ENCODE measurements at regions of chr6 and their contacts with region 1.

Region 1: GRCh38 chr6:144104898-144105487 is 9.6 kb upstream of the SF3B5 start:
- DNase-seq: peak in 5 of 7 donors; percentile 30 to 66 (median 38)
- H3K4me3 ChIP-seq: no peak overlapping the region
- H3K27ac ChIP-seq: no peak overlapping the region
- H3K4me1 ChIP-seq: no peaks in the 10 kb centered on the region
- H3K27me3 ChIP-seq: no peaks in the 10 kb centered on the region
- CTCF ChIP-seq: peak; percentile 58 to 87 (median 78)
- POLR2A ChIP-seq: no peak

Region 2: DNA sequence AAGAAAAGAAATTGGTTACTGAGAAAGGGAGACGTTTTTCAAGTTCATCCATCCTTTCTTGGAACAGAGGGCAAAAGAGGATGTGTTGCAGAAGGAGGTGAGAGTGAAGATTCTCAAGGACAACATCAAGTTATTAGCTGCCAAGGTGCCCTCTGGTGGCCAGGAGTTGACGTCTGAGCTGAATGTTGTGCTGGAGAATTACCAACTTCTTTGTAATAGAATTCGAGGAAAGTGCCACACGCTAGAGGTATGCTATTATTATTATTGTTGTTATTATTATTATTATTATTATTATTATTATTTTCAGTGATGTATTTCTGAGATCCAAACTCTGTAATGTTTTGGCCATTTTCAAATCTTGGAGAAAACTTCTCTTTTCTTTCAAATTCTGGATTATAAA is 377.1 kb after region 1 on chr6:
- intact Hi-C with region 1: loop called in 1 of 2 experiments (anchors 10 kb)
- DNase-seq: peak; percentile 71 to 94 (median 83)
- H3K4me3 ChIP-seq: no peak overlapping the region
- H3K27ac ChIP-seq: no peak overlapping the region
- H3K4me1 ChIP-seq: peaks cover 10 to 16% of the 10 kb centered on the region in 2 donors
- H3K27me3 ChIP-seq: no peaks in the 10 kb centered on the region
- CTCF ChIP-seq: peak; percentile 53 to 76 (median 66)
- POLR2A ChIP-seq: no peak